GM12878 (cell line): ENCODE measurements at regions of chr6 and their contacts with region 1.

Region 1: GRCh38 chr6:27687154-27688013 is 214.5 kb upstream of the ZNF184 start:
- DNase-seq: peak; percentile 67
- ATAC-seq: peak; percentile 90
- H3K4me3 ChIP-seq: peak overlapping the region; percentile 76
- H3K27ac ChIP-seq: peak overlapping the region; percentile 76
- H3K4me1 ChIP-seq: no peaks in the 10 kb centered on the region
- H3K27me3 ChIP-seq: no peaks in the 10 kb centered on the region
- CTCF ChIP-seq: peak; percentile 91 to 96 (median 93)
- EP300 ChIP-seq: no peak
- POLR2A ChIP-seq: peak; percentile 48; the same call in 1 of the 2 replicates
- RAD21 ChIP-seq: peak; percentile 80

Region 2: DNA sequence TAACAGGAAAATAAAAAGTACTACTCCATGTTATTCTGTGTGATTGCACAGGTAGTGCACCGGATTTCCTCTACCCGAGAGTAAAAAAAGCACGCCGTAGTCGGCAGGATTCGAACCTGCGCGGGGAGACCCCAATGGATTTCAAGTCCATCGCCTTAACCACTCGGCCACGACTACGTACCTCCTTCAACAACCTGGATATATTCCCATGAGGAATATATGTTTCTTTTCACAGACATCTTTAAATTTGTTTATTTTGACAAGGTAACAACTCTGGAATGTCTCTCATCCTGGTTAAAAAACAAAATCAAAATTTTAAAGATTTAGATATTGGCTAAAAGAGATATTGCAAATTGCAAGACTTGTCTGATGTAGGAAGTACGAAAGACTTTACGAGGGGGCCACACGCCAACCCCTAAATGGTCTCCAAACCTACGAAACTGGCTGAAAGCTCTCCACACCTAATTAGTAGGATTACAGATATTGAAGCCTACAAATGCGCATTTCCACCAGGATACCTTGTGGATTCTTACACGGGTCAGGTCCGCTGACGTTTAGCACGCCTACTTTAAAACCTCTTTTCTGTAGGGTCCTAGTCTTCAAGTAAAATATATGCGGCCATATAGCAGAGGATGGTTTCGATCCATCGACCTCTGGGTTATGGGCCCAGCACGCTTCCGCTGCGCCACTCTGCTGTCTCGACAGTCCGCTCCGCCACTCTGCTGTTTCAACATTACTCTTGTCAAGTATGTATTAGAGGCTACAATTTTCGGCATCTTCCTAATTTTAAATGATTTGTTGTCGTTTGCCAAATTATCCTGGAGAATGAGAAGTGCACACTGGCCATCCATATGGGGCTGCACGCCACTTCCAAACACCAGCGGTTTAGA is 1374.6 kb before region 1 on chr6:
- CTCF ChIA-PET with region 1: no interaction called
- POLR2A ChIA-PET with region 1: no interaction called
- RAD21 ChIA-PET with region 1: no interaction called
- SMC1A ChIA-PET with region 1: no interaction called
- in situ Hi-C with region 1: loop called (anchors 10 kb)
- intact Hi-C with region 1: no loop called
- DNase-seq: no peak
- ATAC-seq: peak; percentile 72
- H3K4me3 ChIP-seq: peak overlapping the region; percentile 80
- H3K27ac ChIP-seq: peak overlapping the region; percentile 66
- H3K4me1 ChIP-seq: peaks cover 14% of the 10 kb centered on the region
- H3K27me3 ChIP-seq: no peaks in the 10 kb centered on the region
- CTCF ChIP-seq: no peak
- EP300 ChIP-seq: peak in 1 of 2 experiments; percentile 61; a peak in 1 of 4 replicates
- POLR2A ChIP-seq: no peak
- RAD21 ChIP-seq: no peak

Region 3: GRCh38 chr6:27479319-27480182 is 207.8 kb before region 1 on chr6:
- CTCF ChIA-PET with region 1: no interaction called
- POLR2A ChIA-PET with region 1: no interaction called
- RAD21 ChIA-PET with region 1: no interaction called
- SMC1A ChIA-PET with region 1: interaction called, 3 read pairs
- in situ Hi-C with region 1: no loop called
- intact Hi-C with region 1: loop called (anchors 1 kb)
- DNase-seq: peak; percentile 97
- ATAC-seq: peak; percentile 86
- H3K4me3 ChIP-seq: peak overlapping the region; percentile 78
- H3K27ac ChIP-seq: peak overlapping the region; percentile 91
- H3K4me1 ChIP-seq: no peaks in the 10 kb centered on the region
- H3K27me3 ChIP-seq: no peaks in the 10 kb centered on the region
- CTCF ChIP-seq: no peak
- EP300 ChIP-seq: no peak; a peak in 1 of 4 replicates
- POLR2A ChIP-seq: peak; percentile 42
- RAD21 ChIP-seq: no peak

Region 4: GRCh38 chr6:27518881-27519795 is 168.2 kb before region 1 on chr6:
- CTCF ChIA-PET with region 1: interaction called, 14 read pairs
- POLR2A ChIA-PET with region 1: no interaction called
- RAD21 ChIA-PET with region 1: interaction called, 5 read pairs
- SMC1A ChIA-PET with region 1: interaction called, 8 read pairs
- in situ Hi-C with region 1: no loop called
- intact Hi-C with region 1: loop called (anchors 2 kb)
- DNase-seq: peak; percentile 83
- ATAC-seq: peak; percentile 92
- H3K4me3 ChIP-seq: peak overlapping the region; percentile 83
- H3K27ac ChIP-seq: peak overlapping the region; percentile 67
- H3K4me1 ChIP-seq: no peaks in the 10 kb centered on the region
- H3K27me3 ChIP-seq: 0 out of 4 replicates have a peak, but pooled peaks cover 0 to 5% of the 10 kb centered on the region in 2 experiments
- CTCF ChIP-seq: peak; percentile 61 to 72 (median 69)
- EP300 ChIP-seq: peak in 1 of 2 experiments; percentile 15; a peak in 1 of 4 replicates
- POLR2A ChIP-seq: no peak
- RAD21 ChIP-seq: peak; percentile 68

Region 5: DNA sequence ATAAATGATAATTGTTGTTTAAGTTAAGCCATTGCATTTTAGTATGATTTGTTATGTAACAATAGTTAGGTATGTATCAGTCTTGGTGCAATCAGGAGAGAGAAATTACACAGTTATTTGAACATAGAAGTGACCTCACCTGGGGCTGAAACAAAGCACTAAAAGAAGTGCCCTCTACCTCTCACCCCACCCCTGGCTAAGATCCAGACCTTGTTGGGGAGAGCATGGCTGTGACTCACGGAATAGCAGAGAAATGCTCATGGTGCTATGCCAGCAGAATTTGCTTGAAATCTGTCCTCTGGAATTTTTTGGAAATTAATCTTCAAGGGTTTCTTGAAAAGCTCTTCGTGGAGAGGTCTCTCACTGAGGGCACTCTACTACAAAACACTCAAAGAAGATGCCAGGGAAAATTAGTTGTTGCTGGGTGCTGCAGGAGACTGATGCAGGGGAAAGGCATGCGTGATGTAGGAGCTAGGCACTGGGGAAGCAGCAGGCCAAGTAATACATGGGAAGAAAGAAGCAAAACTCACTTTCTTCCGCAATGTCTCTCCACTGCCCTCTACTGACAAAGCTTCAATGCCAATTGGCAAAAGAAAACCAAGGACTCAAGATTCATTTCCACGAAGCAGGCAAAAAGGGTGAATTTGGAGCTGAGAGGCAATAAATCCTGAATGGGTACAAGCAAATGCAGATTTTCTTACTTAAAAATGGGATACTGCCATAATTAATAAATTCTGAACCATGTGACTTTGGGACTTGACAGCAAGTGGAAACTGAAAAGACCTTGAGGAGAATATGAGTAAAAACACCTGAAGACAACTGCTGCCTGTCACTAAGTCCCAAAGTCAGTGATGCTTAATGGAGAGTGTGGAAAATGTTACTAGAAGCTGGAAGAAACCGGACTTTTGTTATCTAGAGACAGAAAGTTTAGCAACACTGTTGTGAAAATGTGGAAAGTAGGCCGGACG is 78.2 kb before region 1 on chr6:
- CTCF ChIA-PET with region 1: interaction called, 14 read pairs
- POLR2A ChIA-PET with region 1: no interaction called
- RAD21 ChIA-PET with region 1: no interaction called
- SMC1A ChIA-PET with region 1: no interaction called
- in situ Hi-C with region 1: no loop called
- intact Hi-C with region 1: no loop called
- DNase-seq: peak; percentile 56
- ATAC-seq: peak; percentile 65
- H3K4me3 ChIP-seq: no peak overlapping the region
- H3K27ac ChIP-seq: no peak overlapping the region
- H3K4me1 ChIP-seq: no peaks in the 10 kb centered on the region
- H3K27me3 ChIP-seq: no peaks in the 10 kb centered on the region
- CTCF ChIP-seq: peak; percentile 82 to 90 (median 90)
- EP300 ChIP-seq: no peak
- POLR2A ChIP-seq: no peak
- RAD21 ChIP-seq: peak; percentile 82

Region 6: DNA sequence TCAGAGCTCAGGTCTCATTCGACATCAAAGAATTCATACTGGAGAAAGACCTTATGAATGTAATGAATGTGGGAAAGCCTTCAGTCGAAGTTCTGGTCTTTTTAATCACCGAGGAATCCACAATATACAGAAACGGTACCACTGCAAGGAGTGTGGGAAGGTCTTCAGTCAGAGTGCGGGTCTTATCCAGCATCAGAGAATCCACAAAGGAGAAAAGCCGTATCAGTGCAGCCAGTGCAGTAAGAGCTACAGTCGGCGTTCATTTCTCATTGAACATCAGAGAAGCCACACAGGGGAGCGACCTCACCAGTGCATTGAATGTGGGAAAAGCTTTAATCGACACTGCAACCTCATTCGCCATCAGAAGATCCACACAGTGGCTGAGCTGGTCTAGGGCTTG is 545.4 kb after region 1 on chr6:
- CTCF ChIA-PET with region 1: no interaction called
- POLR2A ChIA-PET with region 1: no interaction called
- RAD21 ChIA-PET with region 1: no interaction called
- SMC1A ChIA-PET with region 1: no interaction called
- in situ Hi-C with region 1: no loop called
- intact Hi-C with region 1: no loop called
- DNase-seq: no peak
- ATAC-seq: no peak
- H3K4me3 ChIP-seq: no peak overlapping the region
- H3K27ac ChIP-seq: no peak overlapping the region
- H3K4me1 ChIP-seq: no peaks in the 10 kb centered on the region
- H3K27me3 ChIP-seq: no peaks in the 10 kb centered on the region
- CTCF ChIP-seq: no peak
- EP300 ChIP-seq: no peak
- POLR2A ChIP-seq: no peak
- RAD21 ChIP-seq: no peak